AG04449 (cell line): ENCODE measurements at regions of chr7 and their contacts with region 1.

Region 1: GRCh38 chr7:98878365-98879165 is at the start of gene TRRAP:
- DNase-seq: no peak
- H3K4me3 ChIP-seq: peak within 1 kb of the TSS; percentile 91
- CTCF ChIP-seq: peak; percentile 88

Region 2: GRCh38 chr7:98334081-98334480 is 544.5 kb before region 1 on chr7:
- CTCF ChIA-PET with region 1: no interaction called
- POLR2A ChIA-PET with region 1: no interaction called
- DNase-seq: no peak
- H3K4me3 ChIP-seq: no peak overlapping the region
- CTCF ChIP-seq: no peak

Region 3: GRCh38 chr7:98647326-98647725 is 231.2 kb before region 1 on chr7:
- CTCF ChIA-PET with region 1: no interaction called
- POLR2A ChIA-PET with region 1: no interaction called
- DNase-seq: no peak
- H3K4me3 ChIP-seq: no peak overlapping the region
- CTCF ChIP-seq: no peak

Region 4: DNA sequence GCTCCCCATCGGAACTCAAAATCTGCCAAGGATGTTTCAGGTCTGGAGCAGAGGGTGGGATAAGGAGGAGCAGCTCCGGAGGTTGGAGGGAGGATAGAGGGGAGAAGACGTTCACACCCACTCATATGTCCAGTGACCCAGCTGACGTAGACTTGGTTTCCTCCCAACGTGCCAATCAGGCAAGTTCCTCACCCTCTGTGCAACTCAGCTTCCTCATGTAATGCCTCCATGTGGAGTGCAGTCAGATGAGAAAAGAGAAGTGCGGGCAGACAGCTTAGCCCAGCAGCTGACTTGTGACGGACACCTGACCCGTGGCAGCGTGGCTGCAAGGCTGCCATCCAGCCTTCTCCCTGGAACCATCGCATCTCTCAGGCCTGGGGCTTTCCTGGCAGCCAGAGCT is 174.6 kb before region 1 on chr7:
- CTCF ChIA-PET with region 1: no interaction called
- POLR2A ChIA-PET with region 1: no interaction called
- DNase-seq: no peak
- H3K4me3 ChIP-seq: no peak overlapping the region
- CTCF ChIP-seq: no peak

Region 5: GRCh38 chr7:98831641-98832221 is 46.8 kb before region 1 on chr7:
- CTCF ChIA-PET with region 1: interaction called, 30 read pairs
- POLR2A ChIA-PET with region 1: no interaction called
- DNase-seq: no peak
- H3K4me3 ChIP-seq: no peak overlapping the region
- CTCF ChIP-seq: peak; percentile 70

Region 6: GRCh38 chr7:98855610-98856422 is 22.7 kb before region 1 on chr7:
- CTCF ChIA-PET with region 1: interaction called, 18 read pairs
- POLR2A ChIA-PET with region 1: interaction called, 4 read pairs
- DNase-seq: no peak
- H3K4me3 ChIP-seq: no peak overlapping the region
- CTCF ChIP-seq: no peak

Region 7: GRCh38 chr7:98892609-98893008 is 14.0 kb after region 1 on chr7:
- CTCF ChIA-PET with region 1: interaction called, 27 read pairs
- POLR2A ChIA-PET with region 1: no interaction called
- DNase-seq: no peak
- H3K4me3 ChIP-seq: no peak overlapping the region
- CTCF ChIP-seq: no peak

Region 8: GRCh38 chr7:98902523-98902922 is 24.0 kb after region 1 on chr7:
- CTCF ChIA-PET with region 1: interaction called, 27 read pairs
- POLR2A ChIA-PET with region 1: no interaction called
- DNase-seq: no peak
- H3K4me3 ChIP-seq: no peak overlapping the region
- CTCF ChIP-seq: no peak

Region 9: DNA sequence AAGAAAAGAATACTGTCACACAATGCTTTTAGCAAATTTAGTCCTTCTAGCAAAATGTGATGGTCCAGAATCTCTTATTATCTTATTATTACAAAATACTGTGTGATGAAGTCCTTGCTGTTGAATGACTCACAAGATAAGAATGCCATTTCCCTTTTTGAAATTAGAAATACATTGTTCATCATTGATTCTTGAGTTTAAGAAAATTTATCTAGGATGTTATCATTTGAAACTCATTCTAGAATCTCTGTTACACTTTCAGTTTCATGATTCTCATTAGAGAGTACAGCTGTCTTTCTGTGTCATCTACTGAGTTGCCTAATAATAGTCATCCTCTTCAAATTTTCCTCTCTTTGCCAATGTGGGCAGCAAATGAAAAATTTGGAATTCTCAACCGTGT is 635.5 kb after region 1 on chr7:
- CTCF ChIA-PET with region 1: no interaction called
- POLR2A ChIA-PET with region 1: no interaction called
- DNase-seq: no peak
- H3K4me3 ChIP-seq: no peak overlapping the region
- CTCF ChIP-seq: no peak